ENCODE measurements at regions of chr16 and their contacts with region 1.

Region 1: DNA sequence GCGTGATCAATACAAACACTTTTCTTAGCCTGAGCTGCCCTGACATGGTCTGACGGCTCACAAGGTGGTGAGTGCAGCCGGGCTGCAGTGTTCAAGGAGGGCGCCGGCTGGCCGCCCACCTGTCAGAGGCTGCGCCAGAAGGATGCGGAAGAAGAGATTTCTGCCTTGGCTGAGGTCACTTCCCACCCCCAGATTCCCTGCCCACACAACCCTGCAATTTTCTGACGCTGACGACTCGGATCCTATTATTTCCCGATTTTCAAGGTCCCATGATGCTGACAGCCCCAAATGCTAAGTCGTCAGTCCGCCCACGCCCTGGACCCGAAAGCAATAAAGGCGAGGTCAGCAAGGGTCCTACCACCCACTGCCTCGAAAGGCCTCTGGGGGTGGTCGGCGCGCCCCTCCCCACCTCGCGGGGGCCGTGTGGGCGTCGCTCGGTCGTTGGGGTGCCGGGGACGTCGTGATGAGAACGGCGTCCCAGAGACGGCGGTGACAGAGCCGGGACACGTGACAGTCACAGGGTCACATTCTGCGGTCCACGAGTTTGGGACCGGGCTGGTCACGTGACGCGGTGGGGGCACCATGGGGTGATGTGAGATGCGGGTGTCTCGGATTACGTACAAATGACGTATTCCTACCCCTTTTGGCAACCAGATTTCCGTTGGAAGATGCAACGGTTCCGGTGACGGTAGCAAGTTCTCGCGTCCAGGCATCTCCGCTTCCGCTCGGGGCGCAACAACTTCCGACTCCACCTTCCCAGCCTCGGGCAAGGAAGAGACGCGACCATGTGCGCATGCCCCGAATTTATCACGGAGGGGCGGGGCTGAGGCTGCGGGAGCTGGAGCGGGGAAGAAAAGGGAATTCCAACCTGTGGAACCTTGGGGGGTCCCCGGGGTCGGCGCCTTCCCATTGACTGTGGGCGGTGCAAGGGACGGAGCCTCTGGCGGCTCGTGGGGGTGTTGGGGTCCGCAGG is at the start of gene STX4:
- DNase-seq: peak; percentile 98
- ATAC-seq: peak; percentile 89
- H3K4me3 ChIP-seq: peak within 1 kb of the TSS; percentile 58
- H3K27ac ChIP-seq: peak within 1 kb of the TSS; percentile 68
- H3K4me1 ChIP-seq: peaks cover 7% of the 10 kb centered on the region
- H3K27me3 ChIP-seq: no peaks in the 10 kb centered on the region
- CTCF ChIP-seq: no peak
- POLR2A ChIP-seq: peak; percentile 60; the same call in 1 of the 2 replicates
- RAD21 ChIP-seq: 0 out of 2 replicates have a peak, but pooled peaks have one; percentile 4
- total RNA-seq, gene STX4: 23.5 and 25.0 TPM in 2 replicates

Region 2: GRCh38 chr16:30997000-30997886 is 35.8 kb before region 1 on chr16:
- CTCF ChIA-PET with region 1: no interaction called
- POLR2A ChIA-PET with region 1: no interaction called
- dilution Hi-C with region 1: no loop called
- in situ Hi-C with region 1: no loop called
- intact Hi-C with region 1: loop called (anchors 2 kb)
- DNase-seq: peak; percentile 41
- ATAC-seq: peak; percentile 92
- H3K4me3 ChIP-seq: peak overlapping the region; percentile 54
- H3K27ac ChIP-seq: peak overlapping the region; percentile 69
- H3K4me1 ChIP-seq: peaks cover 27% of the 10 kb centered on the region
- H3K27me3 ChIP-seq: no peaks in the 10 kb centered on the region
- CTCF ChIP-seq: no peak
- POLR2A ChIP-seq: no peak
- RAD21 ChIP-seq: no peak

Region 3: GRCh38 chr16:31073968-31074813 is 41.2 kb after region 1 on chr16 and contains the starts of genes ZNF646 and ZNF668:
- CTCF ChIA-PET with region 1: no interaction called
- POLR2A ChIA-PET with region 1: no interaction called
- dilution Hi-C with region 1: no loop called
- in situ Hi-C with region 1: no loop called
- intact Hi-C with region 1: loop called (anchors 1 kb)
- DNase-seq: peak; percentile 100
- ATAC-seq: peak; percentile 76
- H3K4me3 ChIP-seq: peak within 1 kb of the TSS; percentile 81
- H3K27ac ChIP-seq: peak within 1 kb of the TSS; percentile 90
- H3K4me1 ChIP-seq: peaks cover 6% of the 10 kb centered on the region
- H3K27me3 ChIP-seq: no peaks in the 10 kb centered on the region
- CTCF ChIP-seq: no peak
- POLR2A ChIP-seq: peak; percentile 72
- RAD21 ChIP-seq: no peak; the same call in 1 of the 2 replicates
- total RNA-seq, gene ZNF646: 6.8 and 6.9 TPM in 2 replicates
- total RNA-seq, gene ZNF668: 4.5 and 5.3 TPM in 2 replicates

Region 4: GRCh38 chr16:31094424-31095120 is 61.5 kb after region 1 on chr16 and contains the start of gene VKORC1:
- CTCF ChIA-PET with region 1: no interaction called
- POLR2A ChIA-PET with region 1: no interaction called
- dilution Hi-C with region 1: no loop called
- in situ Hi-C with region 1: no loop called
- intact Hi-C with region 1: loop called (anchors 5 kb)
- DNase-seq: peak; percentile 97
- ATAC-seq: peak; percentile 96
- H3K4me3 ChIP-seq: peak within 1 kb of the TSS; percentile 91
- H3K27ac ChIP-seq: peak within 1 kb of the TSS; percentile 63
- H3K4me1 ChIP-seq: peaks cover 3% of the 10 kb centered on the region
- H3K27me3 ChIP-seq: no peaks in the 10 kb centered on the region
- CTCF ChIP-seq: no peak
- POLR2A ChIP-seq: no peak
- RAD21 ChIP-seq: no peak
- total RNA-seq, gene VKORC1: 61.9 and 65.2 TPM in 2 replicates